GM10248 (cell line): ENCODE measurements at regions of chr5 and their contacts with region 1.

Region 1: GRCh38 chr5:132426525-132427138 is 57.1 kb downstream of the SLC22A5 start:
- DNase-seq: peak; percentile 67
- CTCF ChIP-seq: peak; percentile 62

Region 2: DNA sequence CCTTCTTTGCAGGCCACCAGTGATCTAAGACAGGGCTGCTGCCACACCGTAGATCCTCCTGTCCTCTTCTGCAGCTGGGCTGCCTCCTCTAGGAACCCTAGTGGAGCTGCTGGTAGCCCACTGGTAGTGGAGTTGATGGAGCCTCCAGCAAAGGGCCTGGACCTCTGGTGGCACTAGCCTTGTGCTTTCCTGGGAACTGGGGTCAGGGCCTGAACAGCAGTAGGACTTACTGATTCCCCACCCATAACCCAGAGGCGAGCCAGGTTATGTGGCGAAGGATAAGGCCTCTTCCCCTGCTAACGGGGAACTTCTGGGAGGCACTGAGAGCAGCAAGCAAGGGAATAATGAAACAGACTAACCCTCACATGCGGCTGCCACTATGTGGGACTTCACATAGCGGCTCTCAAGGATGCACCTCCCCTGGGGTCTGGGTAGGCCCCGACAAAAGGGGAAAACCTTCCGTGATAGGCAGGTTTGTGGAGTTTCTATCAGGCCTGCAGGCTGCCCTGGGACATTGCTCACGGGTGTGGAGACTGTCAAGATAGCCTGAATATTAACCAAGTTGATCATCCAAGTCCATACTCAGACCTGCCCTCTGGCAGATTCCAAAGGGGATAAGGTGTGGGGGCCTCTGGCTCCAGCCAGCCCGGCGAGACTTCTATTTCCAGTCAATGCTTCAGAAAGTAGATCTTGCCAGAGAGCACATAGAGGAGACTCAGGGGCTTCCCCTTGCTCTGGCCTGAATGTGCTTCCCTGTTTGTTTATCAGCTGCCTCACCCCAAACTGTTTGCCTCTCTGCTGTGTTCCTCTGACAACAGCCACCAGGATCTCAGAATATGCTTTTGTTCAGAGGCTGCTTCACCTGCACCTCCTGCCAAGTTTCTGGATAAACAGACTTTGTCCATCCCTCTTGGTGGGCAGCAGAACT is 125.0 kb before region 1 on chr5:
- CTCF ChIA-PET with region 1: no interaction called
- POLR2A ChIA-PET with region 1: no interaction called
- DNase-seq: no peak
- CTCF ChIP-seq: no peak

Region 3: GRCh38 chr5:132410451-132411381 is 15.9 kb before region 1 on chr5:
- CTCF ChIA-PET with region 1: interaction called, 37 read pairs
- POLR2A ChIA-PET with region 1: interaction called, 7 read pairs
- DNase-seq: peak; percentile 86
- CTCF ChIP-seq: peak; percentile 47

Region 4: GRCh38 chr5:132437604-132438266 is 11.1 kb after region 1 on chr5:
- CTCF ChIA-PET with region 1: interaction called, 59 read pairs
- POLR2A ChIA-PET with region 1: interaction called, 6 read pairs
- DNase-seq: peak; percentile 82
- CTCF ChIP-seq: no peak

Region 5: DNA sequence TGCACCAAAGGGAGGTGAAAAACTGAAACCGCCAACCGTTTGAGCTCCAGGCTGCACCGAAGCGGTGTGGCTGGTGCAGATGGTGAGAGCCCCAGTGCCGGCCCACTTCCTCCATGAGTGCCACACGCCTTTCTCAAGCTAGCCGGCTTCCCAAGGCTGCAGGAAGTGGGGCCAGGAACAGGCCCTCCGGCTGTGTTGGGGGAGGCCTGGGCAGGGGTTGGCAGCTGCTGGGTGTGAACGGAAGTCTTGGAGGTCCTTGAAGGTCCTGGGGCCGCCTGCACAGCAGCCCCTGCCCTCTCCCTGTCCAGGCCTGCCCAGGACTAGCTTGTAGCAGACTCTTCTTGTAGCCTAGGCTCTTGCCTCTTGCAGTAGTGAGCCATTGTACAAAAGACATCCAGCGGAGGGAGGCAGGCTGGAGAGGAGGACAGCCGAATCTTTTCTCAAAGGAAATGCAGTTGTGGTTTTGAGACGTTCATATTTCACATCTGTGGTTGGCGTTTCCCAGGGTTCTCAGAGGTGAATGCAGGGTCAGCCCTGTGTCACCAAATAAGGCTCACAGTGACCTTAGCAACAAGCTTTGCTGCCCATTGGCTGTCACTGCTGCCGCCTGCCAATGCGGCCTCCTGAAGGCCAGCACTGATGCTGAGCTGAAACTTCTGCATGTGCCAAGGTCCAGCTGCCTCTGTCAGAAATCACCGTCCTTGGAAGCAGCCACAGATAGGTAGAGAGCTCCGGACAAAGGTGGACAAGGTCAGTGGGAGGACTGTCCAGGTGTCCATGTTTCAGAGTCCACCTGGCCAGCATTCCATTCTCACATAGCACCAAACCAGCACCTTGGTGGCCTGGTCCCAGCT is 40.0 kb after region 1 on chr5:
- CTCF ChIA-PET with region 1: interaction called, 23 read pairs
- POLR2A ChIA-PET with region 1: interaction called, 8 read pairs
- DNase-seq: peak; percentile 73
- CTCF ChIP-seq: no peak

Region 6: DNA sequence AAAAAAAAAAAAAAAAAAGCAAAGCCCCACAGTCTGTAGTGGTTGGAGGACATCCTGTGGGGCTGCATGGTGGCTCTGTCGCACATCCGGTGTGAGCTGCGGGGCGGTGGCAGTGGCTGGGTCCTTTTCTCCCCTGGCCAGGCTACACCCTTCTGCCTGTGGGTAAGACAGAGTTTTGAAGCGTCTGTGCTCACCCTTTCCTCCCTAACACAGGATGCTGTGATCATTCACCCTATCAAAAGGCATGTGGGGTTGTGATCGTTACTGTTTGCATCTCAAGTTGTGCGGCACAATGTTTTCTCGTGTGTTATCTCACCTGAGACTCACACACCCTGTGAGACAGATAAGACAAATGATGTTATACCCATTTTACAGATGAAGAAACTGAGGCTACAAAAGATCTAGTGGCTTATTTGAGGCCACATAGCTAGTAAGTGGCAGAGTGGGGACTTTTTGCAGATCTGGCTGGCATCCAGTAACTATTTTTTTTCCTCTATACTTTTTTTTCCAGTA is 46.4 kb after region 1 on chr5:
- CTCF ChIA-PET with region 1: interaction called, 61 read pairs
- POLR2A ChIA-PET with region 1: interaction called, 24 read pairs
- DNase-seq: peak; percentile 73
- CTCF ChIP-seq: no peak